ENCODE measurements at regions of chr20 and their contacts with region 1.

Region 1: GRCh38 chr20:9407805-9408421 is 106.5 kb upstream of the LAMP5 start:
- DNase-seq: peak; percentile 57
- H3K4me3 ChIP-seq: no peak overlapping the region; a peak in 1 of 4 replicates
- H3K27ac ChIP-seq: peak overlapping the region; percentile 81 to 88; a peak in 3 of 4 replicates
- H3K4me1 ChIP-seq: peaks cover 2 to 19% of the 10 kb centered on the region in 2 experiments; a peak in 1 of 4 replicates
- H3K27me3 ChIP-seq: no peaks in the 10 kb centered on the region
- CTCF ChIP-seq: peak; percentile 87
- EP300 ChIP-seq: no peak
- RAD21 ChIP-seq: peak; percentile 98

Region 2: DNA sequence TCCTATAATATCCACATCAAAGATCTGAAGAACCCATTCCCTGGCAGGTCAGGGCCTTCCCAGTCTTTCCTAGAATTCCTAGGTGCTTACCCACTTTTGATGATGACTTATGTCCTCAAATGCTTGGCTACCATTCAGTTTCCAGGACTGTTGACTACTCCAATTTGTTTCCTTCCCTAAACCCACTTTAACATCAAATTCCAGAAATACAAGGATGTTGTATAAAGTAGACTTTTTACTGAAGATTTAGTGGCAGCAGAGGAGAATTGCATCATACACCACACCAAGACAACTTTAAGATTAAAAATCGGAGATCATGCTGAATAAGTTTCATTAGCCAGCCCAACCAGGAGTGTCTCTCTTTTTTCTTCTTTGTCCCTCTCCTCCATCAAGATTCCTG is 96.8 kb before region 1 on chr20:
- CTCF ChIA-PET with region 1: no interaction called
- POLR2A ChIA-PET with region 1: no interaction called
- DNase-seq: no peak
- H3K4me3 ChIP-seq: no peak overlapping the region
- H3K27ac ChIP-seq: peak overlapping the region; percentile 46 to 76; a peak in 3 of 4 replicates
- H3K4me1 ChIP-seq: peaks cover 0 to 9% of the 10 kb centered on the region in 2 experiments; a peak in 2 of 4 replicates
- H3K27me3 ChIP-seq: no peaks in the 10 kb centered on the region
- CTCF ChIP-seq: no peak
- EP300 ChIP-seq: no peak
- RAD21 ChIP-seq: no peak

Region 3: GRCh38 chr20:9332783-9333479 is 75.0 kb before region 1 on chr20:
- CTCF ChIA-PET with region 1: no interaction called
- POLR2A ChIA-PET with region 1: no interaction called
- DNase-seq: peak; percentile 9
- H3K4me3 ChIP-seq: no peak overlapping the region
- H3K27ac ChIP-seq: no peak overlapping the region
- H3K4me1 ChIP-seq: peaks cover 0 to 7% of the 10 kb centered on the region in 2 experiments; a peak in 1 of 4 replicates
- H3K27me3 ChIP-seq: no peaks in the 10 kb centered on the region
- CTCF ChIP-seq: no peak
- EP300 ChIP-seq: no peak
- RAD21 ChIP-seq: no peak

Region 4: GRCh38 chr20:9392892-9393857 is 14.7 kb before region 1 on chr20:
- CTCF ChIA-PET with region 1: interaction called, 24 read pairs
- POLR2A ChIA-PET with region 1: no interaction called
- DNase-seq: peak; percentile 77
- H3K4me3 ChIP-seq: peak overlapping the region in 1 of 2 experiments; percentile 32; a peak in 1 of 4 replicates
- H3K27ac ChIP-seq: no peak overlapping the region
- H3K4me1 ChIP-seq: no peaks in the 10 kb centered on the region
- H3K27me3 ChIP-seq: no peaks in the 10 kb centered on the region
- CTCF ChIP-seq: peak; percentile 80
- EP300 ChIP-seq: no peak
- RAD21 ChIP-seq: peak; percentile 85

Region 5: GRCh38 chr20:9458138-9458796 is 50.4 kb after region 1 on chr20:
- CTCF ChIA-PET with region 1: interaction called, 12 read pairs
- POLR2A ChIA-PET with region 1: no interaction called
- DNase-seq: no peak
- H3K4me3 ChIP-seq: no peak overlapping the region
- H3K27ac ChIP-seq: no peak overlapping the region
- H3K4me1 ChIP-seq: peaks cover 0 to 14% of the 10 kb centered on the region in 2 experiments; a peak in 2 of 4 replicates
- H3K27me3 ChIP-seq: no peaks in the 10 kb centered on the region
- CTCF ChIP-seq: peak; percentile 42; the same call in 1 of the 2 replicates
- EP300 ChIP-seq: no peak
- RAD21 ChIP-seq: peak; percentile 26; the same call in 1 of the 2 replicates

Region 6: GRCh38 chr20:9503526-9504245 is 95.8 kb after region 1 on chr20:
- CTCF ChIA-PET with region 1: interaction called, 19 read pairs
- POLR2A ChIA-PET with region 1: no interaction called
- DNase-seq: no peak
- H3K4me3 ChIP-seq: no peak overlapping the region
- H3K27ac ChIP-seq: no peak overlapping the region
- H3K4me1 ChIP-seq: 0 out of 4 replicates have a peak, but pooled peaks cover 0 to 2% of the 10 kb centered on the region in 2 experiments
- H3K27me3 ChIP-seq: no peaks in the 10 kb centered on the region
- CTCF ChIP-seq: peak; percentile 45
- EP300 ChIP-seq: no peak
- RAD21 ChIP-seq: peak; percentile 30

Region 7: DNA sequence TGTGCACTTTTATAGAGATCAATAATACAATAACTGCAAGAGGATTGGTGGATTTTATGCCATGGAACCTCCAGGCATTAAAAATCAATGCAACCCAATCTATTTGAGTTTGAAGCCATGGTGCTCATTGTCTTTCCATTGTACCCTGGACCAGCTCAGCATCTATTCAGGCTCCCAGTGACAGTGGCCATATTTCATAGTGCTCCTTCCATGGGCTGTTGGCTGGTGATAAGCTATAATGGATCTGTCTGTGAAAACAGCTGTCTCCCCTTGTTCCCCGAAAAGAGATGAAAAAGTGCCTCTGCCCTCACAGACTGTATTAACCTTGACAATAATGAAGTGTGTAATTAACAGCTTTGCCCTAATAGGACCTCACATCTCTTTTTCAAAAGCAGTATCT is 180.8 kb after region 1 on chr20:
- CTCF ChIA-PET with region 1: interaction called, 15 read pairs
- POLR2A ChIA-PET with region 1: no interaction called
- DNase-seq: no peak
- H3K4me3 ChIP-seq: no peak overlapping the region
- H3K27ac ChIP-seq: no peak overlapping the region
- H3K4me1 ChIP-seq: no peaks in the 10 kb centered on the region
- H3K27me3 ChIP-seq: no peaks in the 10 kb centered on the region
- CTCF ChIP-seq: no peak
- EP300 ChIP-seq: no peak
- RAD21 ChIP-seq: no peak

Region 8: DNA sequence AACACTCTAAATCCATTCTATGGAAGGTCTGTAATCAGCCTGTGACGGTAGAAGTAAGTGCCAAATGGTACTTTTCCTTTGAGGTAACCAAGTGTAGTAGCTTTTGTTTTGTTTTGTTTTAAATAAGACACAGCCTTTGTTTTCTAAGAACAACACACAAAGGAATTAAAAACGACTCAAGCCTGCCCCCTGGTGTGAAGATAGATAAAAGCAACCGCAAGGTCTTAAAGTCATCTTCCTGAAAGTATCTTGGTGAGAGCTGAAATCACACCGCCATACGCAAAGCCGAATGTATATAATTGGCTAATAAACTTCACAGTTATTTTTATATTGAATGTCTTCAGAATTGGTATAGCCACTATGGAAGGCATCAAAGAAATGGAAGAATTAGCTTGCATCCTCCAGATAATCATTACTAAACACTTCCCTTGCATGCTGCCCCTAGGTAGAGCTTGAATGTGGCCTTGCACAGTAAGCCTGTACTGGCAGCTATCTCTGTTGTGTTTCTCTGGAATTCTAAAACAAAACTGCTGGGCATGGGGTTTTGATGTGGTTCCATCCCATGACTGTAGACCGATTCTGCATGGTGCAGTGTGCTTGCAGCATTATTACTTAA is 202.1 kb after region 1 on chr20:
- CTCF ChIA-PET with region 1: interaction called, 255 read pairs
- POLR2A ChIA-PET with region 1: interaction called, 3 read pairs
- DNase-seq: peak; percentile 32
- H3K4me3 ChIP-seq: no peak overlapping the region; a peak in 1 of 4 replicates
- H3K27ac ChIP-seq: peak overlapping the region in 1 of 2 experiments; percentile 51; a peak in 1 of 4 replicates
- H3K4me1 ChIP-seq: peaks cover 0 to 14% of the 10 kb centered on the region in 2 experiments; a peak in 3 of 4 replicates
- H3K27me3 ChIP-seq: no peaks in the 10 kb centered on the region
- CTCF ChIP-seq: peak; percentile 83
- EP300 ChIP-seq: no peak
- RAD21 ChIP-seq: peak; percentile 93

Region 9: GRCh38 chr20:9668381-9668780 is 260.5 kb after region 1 on chr20:
- CTCF ChIA-PET with region 1: no interaction called
- POLR2A ChIA-PET with region 1: no interaction called
- DNase-seq: no peak
- H3K4me3 ChIP-seq: no peak overlapping the region
- H3K27ac ChIP-seq: no peak overlapping the region
- H3K4me1 ChIP-seq: no peaks in the 10 kb centered on the region
- H3K27me3 ChIP-seq: no peaks in the 10 kb centered on the region
- CTCF ChIP-seq: no peak
- EP300 ChIP-seq: no peak
- RAD21 ChIP-seq: no peak

Region 10: DNA sequence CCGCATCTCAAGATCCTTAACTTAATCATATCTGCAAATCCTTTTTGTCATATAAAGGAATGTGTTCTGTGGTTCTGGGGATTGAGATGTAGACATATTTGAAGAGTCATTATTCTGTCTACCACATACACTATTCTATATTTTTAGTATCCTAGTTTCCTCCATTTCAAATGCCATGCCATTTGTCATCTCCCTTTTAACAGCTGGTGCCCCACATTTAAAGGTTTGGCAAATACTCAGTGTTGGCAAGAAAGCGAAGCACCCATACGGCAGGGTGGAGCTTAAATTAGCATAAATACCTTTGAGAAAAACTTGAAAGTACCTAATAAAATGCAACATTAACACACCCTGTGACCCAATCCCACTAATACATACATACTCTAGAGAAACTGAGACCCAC is 399.2 kb after region 1 on chr20:
- CTCF ChIA-PET with region 1: no interaction called
- POLR2A ChIA-PET with region 1: no interaction called
- DNase-seq: no peak
- H3K4me3 ChIP-seq: no peak overlapping the region
- H3K27ac ChIP-seq: no peak overlapping the region
- H3K4me1 ChIP-seq: no peaks in the 10 kb centered on the region
- H3K27me3 ChIP-seq: no peaks in the 10 kb centered on the region
- CTCF ChIP-seq: no peak
- EP300 ChIP-seq: no peak
- RAD21 ChIP-seq: no peak

Region 11: DNA sequence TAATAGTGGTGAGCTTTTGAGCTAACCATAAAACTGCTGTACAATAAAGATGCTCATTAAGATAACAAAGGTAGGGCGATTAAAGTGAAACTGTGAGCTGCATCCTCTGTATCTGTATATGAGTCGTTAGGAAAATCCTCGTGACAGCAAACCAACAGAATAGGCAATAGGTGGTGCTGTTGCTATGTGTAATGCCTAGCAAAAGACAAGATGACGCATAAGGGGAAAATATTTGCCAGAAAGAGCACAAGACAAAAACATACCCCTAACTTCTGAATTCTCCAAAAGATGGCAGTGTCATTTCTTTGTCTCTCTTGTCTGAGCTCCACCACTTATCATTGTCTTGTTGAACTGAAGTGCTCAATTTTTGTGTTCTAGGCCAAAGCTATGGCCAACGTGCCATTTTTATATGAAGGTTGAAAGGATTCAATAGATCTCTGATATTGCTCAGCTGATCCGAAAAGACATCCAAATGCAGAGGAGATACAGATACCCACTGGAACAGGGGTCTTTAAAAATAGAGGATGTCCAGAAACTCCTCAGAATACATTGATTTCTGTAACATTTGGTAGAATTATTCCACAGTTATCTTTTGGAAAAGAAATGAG is 570.6 kb after region 1 on chr20:
- CTCF ChIA-PET with region 1: interaction called, 10 read pairs
- POLR2A ChIA-PET with region 1: no interaction called
- DNase-seq: peak; percentile 66
- H3K4me3 ChIP-seq: peak overlapping the region; percentile 6 to 16; a peak in 2 of 4 replicates
- H3K27ac ChIP-seq: no peak overlapping the region; a peak in 1 of 4 replicates
- H3K4me1 ChIP-seq: no peaks in the 10 kb centered on the region; a peak in 1 of 4 replicates
- H3K27me3 ChIP-seq: no peaks in the 10 kb centered on the region
- CTCF ChIP-seq: peak; percentile 94
- EP300 ChIP-seq: no peak
- RAD21 ChIP-seq: peak; percentile 99